Activated T-helper 2 cell treated with anti-CD3 and anti-CD28 coated beads, Interferon-gamma antibody, Interleukin-2, Interleukin-4, amounts not matched to agents 10 μg/mL and 5 μg/mL and 100 μg/mL, durations not matched to agents 14 hours and 24 hours and 36 hours (primary cell): ENCODE measurements at regions of chr2 and their contacts with region 1.

Region 1: GRCh38 chr2:46632349-46632748 is 153.0 kb downstream of the TMEM247 start:
- DNase-seq: no peak
- H3K4me3 Mint-ChIP-seq: no peak overlapping the region
- H3K27ac Mint-ChIP-seq: no peak overlapping the region
- H3K4me1 Mint-ChIP-seq: peaks cover 8% of the 10 kb centered on the region
- H3K27me3 Mint-ChIP-seq: no peaks in the 10 kb centered on the region

Region 2: GRCh38 chr2:46887028-46887885 is 254.9 kb after region 1 on chr2:
- intact Hi-C with region 1: loop called (anchors 5 kb)
- DNase-seq: no peak
- H3K4me3 Mint-ChIP-seq: no peak overlapping the region
- H3K27ac Mint-ChIP-seq: no peak overlapping the region
- H3K4me1 Mint-ChIP-seq: peaks cover 3% of the 10 kb centered on the region
- H3K27me3 Mint-ChIP-seq: peaks cover 25% of the 10 kb centered on the region